Right lobe of liver (tissue), 6 donors: ENCODE measurements at regions of chr11 and their contacts with region 1.

Region 1: GRCh38 chr11:43282607-43283440 is 29.0 kb upstream of the API5 start:
- DNase-seq: peak; percentile 31 to 60 (median 51)
- ATAC-seq: peak; percentile 58 to 72 (median 66)
- H3K4me3 ChIP-seq: no peak overlapping the region
- H3K27ac ChIP-seq: no peak overlapping the region
- H3K4me1 ChIP-seq: no peaks in the 10 kb centered on the region
- H3K27me3 ChIP-seq: no peaks in the 10 kb centered on the region
- CTCF ChIP-seq: peak; percentile 52 to 87 (median 85)
- POLR2A ChIP-seq: no peak

Region 2: DNA sequence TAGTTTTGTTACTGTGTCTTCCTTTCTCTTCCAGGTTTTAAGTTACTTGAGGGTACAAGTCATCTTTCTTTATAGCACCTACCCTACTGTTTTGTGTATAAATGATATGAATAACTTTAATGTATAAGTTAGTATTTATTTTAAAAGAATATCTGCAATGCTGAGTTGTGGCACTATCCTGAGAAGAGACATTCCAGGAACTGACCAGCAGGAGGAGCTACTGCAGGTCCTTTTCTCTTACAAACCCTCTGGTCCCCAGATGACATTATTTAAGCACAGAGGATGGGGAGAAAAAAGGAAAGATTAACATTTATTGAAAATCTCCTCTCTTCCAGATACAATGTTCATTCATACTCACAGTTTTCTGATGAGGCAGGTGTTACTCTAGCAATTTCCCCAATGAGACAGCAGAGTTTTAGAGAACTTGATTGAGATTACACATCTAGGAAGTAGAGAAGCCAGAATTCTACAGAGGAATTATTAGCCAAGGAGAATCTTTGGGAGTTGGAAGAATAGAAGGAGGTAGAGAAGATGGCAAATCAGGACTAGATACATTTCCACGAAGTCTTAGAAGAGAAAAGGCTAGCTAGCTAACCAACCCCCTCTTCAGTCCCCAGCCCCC is 512.3 kb before region 1 on chr11:
- intact Hi-C with region 1: loop called (anchors 10 kb)
- DNase-seq: peak in 1 of 3 donors; percentile 40
- ATAC-seq: peak; percentile 42 to 63 (median 54)
- H3K4me3 ChIP-seq: no peak overlapping the region
- H3K27ac ChIP-seq: no peak overlapping the region
- H3K4me1 ChIP-seq: no peaks in the 10 kb centered on the region
- H3K27me3 ChIP-seq: no peaks in the 10 kb centered on the region
- CTCF ChIP-seq: peak; percentile 43 to 68 (median 66)
- POLR2A ChIP-seq: no peak